A549 (cell line): ENCODE measurements at regions of chr2 and their contacts with region 1.

Region 1: GRCh38 chr2:41869542-41870264 is 178.1 kb upstream of the PKDCC start:
- DNase-seq: peak; percentile 75 to 76
- ATAC-seq: peak; percentile 89 to 96
- H3K4me3 ChIP-seq: no peak overlapping the region
- H3K27ac ChIP-seq: peak overlapping the region; percentile 73 to 85
- H3K4me1 ChIP-seq: peaks cover 62% of the 10 kb centered on the region
- CTCF ChIP-seq: peak; percentile 96
- EP300 ChIP-seq: no peak
- POLR2A ChIP-seq: no peak
- RAD21 ChIP-seq: peak; percentile 99 to 100

Region 2: DNA sequence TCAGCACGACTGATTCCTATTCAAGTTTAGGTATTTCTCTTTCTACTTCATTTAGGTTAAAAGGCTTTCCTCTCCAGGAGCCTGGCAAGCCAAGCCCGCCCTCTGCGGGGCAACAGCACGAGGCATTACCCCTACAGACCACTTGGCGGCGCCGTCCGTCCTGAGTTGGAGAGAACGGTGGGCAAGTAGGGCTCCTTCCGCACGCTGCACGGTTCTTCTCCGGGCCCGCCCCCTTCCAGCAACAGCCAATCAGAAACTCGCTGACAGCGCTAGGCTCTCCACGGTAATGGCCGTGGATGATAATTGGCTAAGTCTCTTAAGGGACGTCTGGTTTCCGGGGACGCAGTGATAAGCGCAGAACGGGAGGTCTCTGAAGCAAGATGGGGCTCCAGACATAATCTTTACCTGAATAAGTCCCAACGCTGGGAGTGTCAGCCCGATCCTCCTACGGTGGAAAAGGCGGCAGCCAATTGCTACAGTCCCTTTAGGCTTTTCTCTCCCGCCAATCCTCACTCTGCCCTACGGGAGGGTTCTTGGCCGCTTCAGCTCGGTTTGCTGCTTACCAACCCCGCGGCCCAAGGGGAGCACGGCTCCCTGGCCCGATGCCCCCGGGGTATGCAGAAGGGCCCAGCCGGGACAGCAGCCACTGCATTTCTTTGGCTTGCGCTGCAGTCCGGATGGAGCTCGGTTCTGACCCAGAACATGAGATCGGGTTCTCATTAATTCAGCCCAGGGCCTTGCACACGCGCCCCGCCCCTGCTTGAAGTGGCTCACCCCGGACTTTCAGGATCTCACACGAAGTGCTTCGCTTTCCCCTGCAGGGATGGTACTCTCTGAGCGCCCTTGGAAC is 28.8 kb before region 1 on chr2:
- CTCF ChIA-PET with region 1: interaction called, 16 read pairs
- POLR2A ChIA-PET with region 1: interaction called, 3 read pairs
- DNase-seq: peak; percentile 97 to 99
- ATAC-seq: peak; percentile 98 to 100
- H3K4me3 ChIP-seq: peak overlapping the region; percentile 67
- H3K27ac ChIP-seq: peak overlapping the region; percentile 86 to 95
- H3K4me1 ChIP-seq: peaks cover 11% of the 10 kb centered on the region
- CTCF ChIP-seq: peak; percentile 99
- EP300 ChIP-seq: no peak
- POLR2A ChIP-seq: peak; percentile 77
- RAD21 ChIP-seq: peak; percentile 97 to 98

Region 3: DNA sequence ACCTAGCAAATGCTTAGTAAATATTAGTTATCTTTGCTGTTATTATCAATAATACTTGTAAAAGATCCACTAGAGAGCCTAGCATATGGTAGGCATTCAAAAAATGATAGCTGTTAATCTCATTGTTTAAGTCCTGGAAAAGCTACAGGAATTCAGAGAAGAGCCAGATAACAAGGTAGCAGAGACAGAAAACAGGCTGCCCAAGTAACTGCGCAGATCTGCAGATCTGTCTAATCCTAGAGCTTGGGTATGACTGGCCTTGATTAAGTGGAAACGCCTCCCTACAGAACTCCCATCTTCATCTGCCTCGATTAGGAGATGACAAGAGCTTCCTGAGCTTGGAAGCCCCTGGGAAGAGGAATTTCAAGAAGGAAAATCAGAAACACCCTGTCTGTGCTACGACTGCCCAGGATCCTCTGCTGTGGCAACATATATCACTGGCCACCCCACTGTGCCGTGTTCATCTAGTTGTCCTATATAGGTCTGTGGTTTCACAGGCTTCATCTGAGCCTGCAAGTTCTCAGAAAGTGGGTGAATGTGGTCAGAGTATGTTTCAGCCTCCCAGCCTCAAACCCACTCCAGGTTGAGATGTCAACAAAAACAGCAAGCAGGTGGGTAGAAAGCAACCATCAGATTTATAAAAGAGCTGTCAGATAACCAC is 26.6 kb after region 1 on chr2:
- CTCF ChIA-PET with region 1: interaction called, 42 read pairs
- POLR2A ChIA-PET with region 1: no interaction called
- DNase-seq: no peak
- ATAC-seq: no peak
- H3K4me3 ChIP-seq: no peak overlapping the region
- H3K27ac ChIP-seq: 0 out of 6 replicates have a peak overlapping the region, but pooled peaks of 1 of the 2 experiments have one; percentile 8
- H3K4me1 ChIP-seq: peaks cover 10% of the 10 kb centered on the region; the same call in 1 of the 3 replicates
- CTCF ChIP-seq: no peak
- EP300 ChIP-seq: no peak
- POLR2A ChIP-seq: no peak
- RAD21 ChIP-seq: no peak

Region 4: GRCh38 chr2:41966431-41966893 is 96.8 kb after region 1 on chr2:
- CTCF ChIA-PET with region 1: interaction called, 17 read pairs
- POLR2A ChIA-PET with region 1: no interaction called
- DNase-seq: peak; percentile 79 to 89
- ATAC-seq: peak; percentile 81 to 89
- H3K4me3 ChIP-seq: no peak overlapping the region
- H3K27ac ChIP-seq: peak overlapping the region; percentile 74 to 83
- H3K4me1 ChIP-seq: peaks cover 61% of the 10 kb centered on the region
- CTCF ChIP-seq: no peak
- EP300 ChIP-seq: peak; percentile 77 to 90; a peak in 3 of 5 replicates
- POLR2A ChIP-seq: no peak
- RAD21 ChIP-seq: peak; percentile 29 to 56; a peak in 4 of 5 replicates

Region 5: GRCh38 chr2:42047488-42048298 is 178.0 kb after region 1 on chr2 and contains the start of gene PKDCC:
- CTCF ChIA-PET with region 1: interaction called, 27 read pairs
- POLR2A ChIA-PET with region 1: interaction called, 4 read pairs
- DNase-seq: peak; percentile 84 to 91
- ATAC-seq: peak; percentile 76 to 83
- H3K4me3 ChIP-seq: peak within 1 kb of the TSS; percentile 63
- H3K27ac ChIP-seq: peak within 1 kb of the TSS; percentile 79 to 96
- H3K4me1 ChIP-seq: peaks cover 52% of the 10 kb centered on the region
- CTCF ChIP-seq: no peak
- EP300 ChIP-seq: no peak
- POLR2A ChIP-seq: peak; percentile 41; the same call in 1 of the 2 replicates
- RAD21 ChIP-seq: 0 out of 5 replicates have a peak, but pooled peaks have one; percentile 5 to 23
- polyA plus RNA-seq, gene PKDCC: 30.0 and 42.9 TPM in 2 replicates

Region 6: DNA sequence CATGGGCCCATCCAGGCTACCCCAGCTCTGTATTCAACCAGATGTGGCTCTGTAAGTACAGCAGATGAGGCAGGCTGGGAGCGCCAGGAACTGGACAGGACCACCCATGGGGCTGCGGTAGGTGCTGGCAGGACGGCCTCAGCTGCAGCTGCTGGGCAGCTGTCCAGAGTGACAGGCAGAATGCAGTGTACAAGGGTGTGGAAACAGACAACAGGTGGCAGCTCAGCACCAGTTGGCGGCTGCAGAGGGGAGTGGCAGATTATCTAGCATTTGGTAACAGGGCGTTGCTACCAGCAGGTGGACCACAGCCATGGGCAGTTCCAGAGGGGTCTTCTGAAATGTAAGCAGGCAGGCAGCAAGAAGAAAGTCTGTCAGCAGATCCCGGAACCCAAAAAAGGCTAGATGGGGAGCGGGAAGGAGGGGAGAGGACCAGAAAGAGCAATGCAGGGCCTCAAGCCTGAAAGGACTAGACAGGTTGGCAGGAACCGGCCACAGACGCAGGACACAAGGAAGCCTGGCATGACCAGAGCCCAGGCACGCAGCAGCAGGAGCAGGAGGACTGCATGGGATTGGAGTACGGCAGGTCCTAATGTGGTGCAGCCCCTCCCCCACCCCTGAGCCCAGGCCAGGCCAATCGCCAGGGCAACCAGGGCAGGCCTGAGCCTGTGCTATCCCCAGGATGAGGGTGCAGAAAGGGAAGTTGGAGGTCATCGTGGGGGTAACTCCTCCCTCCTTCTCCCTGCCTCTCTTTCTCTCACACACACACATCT is 202.8 kb after region 1 on chr2:
- CTCF ChIA-PET with region 1: interaction called, 761 read pairs
- POLR2A ChIA-PET with region 1: no interaction called
- DNase-seq: no peak
- ATAC-seq: peak; percentile 36 to 56; a peak in 4 of 6 replicates
- H3K4me3 ChIP-seq: no peak overlapping the region
- H3K27ac ChIP-seq: peak overlapping the region in 1 of 2 experiments; percentile 9; a peak in 4 of 6 replicates
- H3K4me1 ChIP-seq: peaks cover 17% of the 10 kb centered on the region; the same call in 2 of the 3 replicates
- CTCF ChIP-seq: no peak
- EP300 ChIP-seq: no peak
- POLR2A ChIP-seq: no peak
- RAD21 ChIP-seq: peak in 1 of 2 experiments; percentile 25; a peak in 1 of 5 replicates

Region 7: GRCh38 chr2:42328148-42328833 is 458.6 kb after region 1 on chr2:
- CTCF ChIA-PET with region 1: interaction called, 13 read pairs
- POLR2A ChIA-PET with region 1: no interaction called
- DNase-seq: peak; percentile 36 to 49
- ATAC-seq: peak; percentile 65 to 81; a peak in 4 of 6 replicates
- H3K4me3 ChIP-seq: no peak overlapping the region
- H3K27ac ChIP-seq: no peak overlapping the region
- H3K4me1 ChIP-seq: peaks cover 18% of the 10 kb centered on the region
- CTCF ChIP-seq: peak; percentile 83
- EP300 ChIP-seq: no peak
- POLR2A ChIP-seq: no peak
- RAD21 ChIP-seq: peak; percentile 77 to 84